ENCODE measurements at regions of chr2 and their contacts with region 1.

Region 1: GRCh38 chr2:71460595-71461303 is 7.4 kb downstream of the DYSF start:
- DNase-seq: no peak
- H3K4me3 ChIP-seq: no peak overlapping the region
- H3K27me3 ChIP-seq: peaks cover 20% of the 10 kb centered on the region
- CTCF ChIP-seq: peak; percentile 72

Region 2: GRCh38 chr2:71173096-71173495 is 287.7 kb before region 1 on chr2:
- CTCF ChIA-PET with region 1: no interaction called
- POLR2A ChIA-PET with region 1: no interaction called
- DNase-seq: no peak
- H3K4me3 ChIP-seq: no peak overlapping the region
- H3K27me3 ChIP-seq: peaks cover 11% of the 10 kb centered on the region
- CTCF ChIP-seq: no peak

Region 3: DNA sequence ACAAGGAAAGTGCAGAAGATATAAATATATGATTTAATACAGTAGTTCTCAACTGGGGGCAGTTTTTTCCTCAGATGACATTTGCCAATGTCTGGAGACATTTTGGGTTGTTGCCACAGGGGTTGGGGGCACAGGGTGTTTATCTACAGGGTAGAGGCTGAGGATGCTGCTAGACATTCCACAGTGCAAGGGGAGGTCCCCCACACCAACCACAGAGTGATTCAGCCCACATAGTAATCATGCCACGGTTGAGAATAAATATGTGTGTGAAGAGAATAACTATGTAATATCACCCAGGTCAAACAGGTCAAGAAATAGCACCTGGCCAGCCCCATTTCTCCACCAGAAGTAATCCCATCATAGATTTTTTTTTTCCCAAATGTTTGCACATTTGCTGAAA is 10.5 kb after region 1 on chr2:
- CTCF ChIA-PET with region 1: interaction called, 14 read pairs
- POLR2A ChIA-PET with region 1: no interaction called
- DNase-seq: peak; percentile 26
- H3K4me3 ChIP-seq: no peak overlapping the region
- H3K27me3 ChIP-seq: peaks cover 14% of the 10 kb centered on the region
- CTCF ChIP-seq: no peak

Region 4: GRCh38 chr2:71721362-71721665 is 260.6 kb after region 1 on chr2:
- CTCF ChIA-PET with region 1: no interaction called
- POLR2A ChIA-PET with region 1: no interaction called
- DNase-seq: peak; percentile 50
- H3K4me3 ChIP-seq: no peak overlapping the region
- H3K27me3 ChIP-seq: peaks cover 2% of the 10 kb centered on the region; the same call in 1 of the 2 replicates
- CTCF ChIP-seq: no peak

Region 5: DNA sequence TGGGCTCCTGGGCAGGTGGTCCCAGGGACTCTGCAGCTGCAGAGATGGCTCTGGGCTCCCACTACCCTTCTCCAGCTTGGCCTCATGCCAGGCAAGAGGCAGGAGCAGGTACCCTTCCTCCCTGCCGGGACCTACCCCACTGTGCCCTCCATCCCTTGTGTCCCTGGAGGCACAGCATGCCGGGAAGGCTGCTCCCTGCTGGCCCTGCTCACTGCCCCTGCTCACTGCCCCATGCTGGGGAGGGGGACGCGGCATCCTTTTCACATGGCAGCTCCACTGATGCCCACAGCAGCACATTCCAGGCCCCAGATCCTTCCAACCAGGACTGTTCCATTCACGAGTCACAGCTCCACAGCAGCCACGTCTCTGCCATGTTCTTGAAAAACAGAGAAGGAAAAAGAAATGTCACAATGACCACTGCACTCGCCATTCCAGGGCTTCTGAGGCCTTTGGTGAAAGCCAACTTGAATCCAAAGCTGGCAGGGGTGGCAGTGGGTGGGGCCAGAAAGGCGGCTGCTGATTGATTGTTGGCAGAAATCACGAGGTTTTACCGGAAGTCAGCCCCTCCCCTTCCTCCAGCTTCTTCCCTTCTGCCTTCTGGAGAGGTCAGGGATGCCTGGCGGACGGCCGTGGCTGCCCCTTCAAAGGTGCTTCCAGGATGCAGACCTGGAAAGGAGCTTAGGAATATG is 418.9 kb after region 1 on chr2:
- CTCF ChIA-PET with region 1: no interaction called
- POLR2A ChIA-PET with region 1: no interaction called
- DNase-seq: no peak
- H3K4me3 ChIP-seq: no peak overlapping the region
- H3K27me3 ChIP-seq: no peaks in the 10 kb centered on the region
- CTCF ChIP-seq: no peak

Measured in BJ (cell line).